PC-3 (cell line): ENCODE measurements at regions of chr20 and their contacts with region 1.

Region 1: DNA sequence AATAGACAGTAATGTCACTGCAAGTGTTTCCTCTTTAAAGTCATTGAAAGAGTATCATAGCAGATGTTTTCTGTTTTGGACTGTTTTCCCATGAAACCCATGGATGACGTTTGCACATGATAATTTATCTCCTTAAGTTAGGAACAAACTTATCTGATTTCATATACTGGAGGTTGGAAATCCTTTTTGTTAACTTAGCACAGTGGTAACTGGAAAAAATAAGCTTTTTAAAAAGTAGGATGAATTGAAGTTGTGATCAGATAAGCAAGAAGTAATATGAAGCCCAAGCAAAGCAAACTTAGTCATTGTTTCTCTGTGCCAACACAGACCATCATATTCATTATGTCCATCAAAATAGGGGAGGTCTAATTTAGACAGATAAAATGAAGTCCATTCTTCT is 61.6 kb downstream of the PLCB4 start:
- DNase-seq: no peak
- ATAC-seq: no peak
- H3K4me3 ChIP-seq: no peak overlapping the region
- H3K27ac ChIP-seq: no peak overlapping the region
- H3K4me1 ChIP-seq: no peaks in the 10 kb centered on the region
- H3K27me3 ChIP-seq: no peaks in the 10 kb centered on the region
- CTCF ChIP-seq: no peak

Region 2: DNA sequence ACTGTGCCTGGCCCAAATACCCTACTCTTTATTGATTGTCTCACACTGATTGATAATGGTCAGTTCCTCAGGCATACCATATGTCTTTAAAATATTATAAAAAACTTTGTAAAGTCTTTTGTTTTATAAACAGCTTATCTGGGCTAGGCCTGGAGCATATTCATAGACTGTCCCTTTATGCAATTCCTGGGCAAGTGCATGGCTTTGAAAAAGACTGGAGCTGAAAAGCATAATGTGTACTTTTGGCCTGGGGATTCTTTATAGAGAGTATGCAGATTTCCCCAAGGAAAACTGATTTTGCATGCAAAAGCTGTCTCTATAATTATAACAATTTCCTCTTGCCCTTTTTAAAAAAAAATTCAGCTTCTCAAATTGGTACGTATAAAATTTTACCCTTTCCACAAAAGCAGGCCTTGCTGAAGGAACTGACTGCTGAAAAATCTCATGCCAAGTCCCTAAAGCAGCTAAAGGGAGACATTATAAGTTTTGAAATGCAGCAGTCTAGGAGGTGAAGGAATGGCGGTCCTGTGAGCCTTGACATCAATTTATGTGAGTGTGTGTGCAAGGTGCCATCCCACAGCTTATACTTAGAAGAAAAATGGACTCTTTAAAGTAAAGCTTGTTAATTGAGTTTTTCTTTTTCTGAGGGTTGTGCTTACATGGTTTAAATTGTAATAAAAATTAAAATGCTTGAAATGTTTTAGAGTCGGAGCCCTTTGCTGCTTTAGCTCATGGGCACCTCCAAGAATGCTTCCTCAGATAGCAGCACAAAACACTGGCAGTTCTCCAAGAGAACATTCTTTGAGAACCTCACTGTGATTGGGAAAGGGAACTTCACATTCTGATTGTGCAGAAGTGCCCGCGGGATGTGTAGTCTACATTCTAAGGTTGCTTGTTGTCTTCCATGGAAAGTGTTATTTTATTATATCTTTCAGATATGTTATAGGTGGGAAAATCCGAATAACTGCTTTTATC is 17.7 kb before region 1 on chr20:
- CTCF ChIA-PET with region 1: no interaction called
- POLR2A ChIA-PET with region 1: no interaction called
- intact Hi-C with region 1: no loop called
- DNase-seq: no peak
- ATAC-seq: no peak
- H3K4me3 ChIP-seq: no peak overlapping the region
- H3K27ac ChIP-seq: no peak overlapping the region
- H3K4me1 ChIP-seq: no peaks in the 10 kb centered on the region
- H3K27me3 ChIP-seq: no peaks in the 10 kb centered on the region
- CTCF ChIP-seq: no peak

Region 3: DNA sequence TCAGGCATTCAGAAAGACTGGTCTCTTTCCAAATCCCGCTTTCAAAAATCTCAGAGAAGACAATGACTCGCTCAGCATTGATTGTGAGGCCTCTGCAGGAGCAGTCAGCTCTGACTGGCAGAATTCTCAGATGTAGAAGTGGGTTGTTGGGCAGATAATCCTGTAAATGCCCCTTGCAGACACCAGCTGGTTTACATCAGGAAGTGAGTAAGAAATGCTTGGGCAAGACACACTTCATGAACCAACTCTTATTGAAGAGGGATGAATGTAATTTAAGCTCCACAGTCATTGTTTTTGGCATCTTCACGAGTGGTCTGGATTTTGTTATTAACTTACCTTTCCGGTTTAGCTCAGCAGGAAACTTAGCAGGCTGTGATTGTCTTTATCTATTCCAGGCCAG is 105.0 kb after region 1 on chr20:
- CTCF ChIA-PET with region 1: no interaction called
- POLR2A ChIA-PET with region 1: interaction called, 11 read pairs
- intact Hi-C with region 1: no loop called
- DNase-seq: peak; percentile 83
- ATAC-seq: peak; percentile 93
- H3K4me3 ChIP-seq: no peak overlapping the region
- H3K27ac ChIP-seq: peak overlapping the region; percentile 14
- H3K4me1 ChIP-seq: peaks cover 21% of the 10 kb centered on the region
- H3K27me3 ChIP-seq: no peaks in the 10 kb centered on the region
- CTCF ChIP-seq: no peak